AG04450 (cell line): ENCODE measurements at regions of chr6 and their contacts with region 1.

Region 1: GRCh38 chr6:116190550-116190949 is 63.3 kb downstream of the TSPYL4 start:
- DNase-seq: peak; percentile 70
- H3K4me3 ChIP-seq: no peak overlapping the region
- H3K27ac ChIP-seq: no peak overlapping the region
- H3K27me3 ChIP-seq: no peaks in the 10 kb centered on the region
- CTCF ChIP-seq: no peak

Region 2: GRCh38 chr6:116003668-116004067 is 186.9 kb before region 1 on chr6:
- CTCF ChIA-PET with region 1: no interaction called
- POLR2A ChIA-PET with region 1: interaction called, 14 read pairs
- DNase-seq: no peak
- H3K4me3 ChIP-seq: no peak overlapping the region
- H3K27ac ChIP-seq: no peak overlapping the region
- H3K27me3 ChIP-seq: no peaks in the 10 kb centered on the region
- CTCF ChIP-seq: no peak